Activated CD8-positive, alpha-beta T cell treated with anti-CD3 and anti-CD28 coated beads for 36 hours (primary cell): ENCODE measurements at regions of chr20 and their contacts with region 1.

Region 1: GRCh38 chr20:50516180-50516934 is 6.2 kb downstream of the PTPN1 start:
- DNase-seq: peak; percentile 26
- ATAC-seq: peak; percentile 45
- H3K4me3 Mint-ChIP-seq: peak overlapping the region; percentile 78
- H3K27ac Mint-ChIP-seq: peak overlapping the region; percentile 98
- H3K4me1 Mint-ChIP-seq: peaks cover 87% of the 10 kb centered on the region
- H3K27me3 Mint-ChIP-seq: no peaks in the 10 kb centered on the region
- CTCF ChIP-seq: no peak

Region 2: DNA sequence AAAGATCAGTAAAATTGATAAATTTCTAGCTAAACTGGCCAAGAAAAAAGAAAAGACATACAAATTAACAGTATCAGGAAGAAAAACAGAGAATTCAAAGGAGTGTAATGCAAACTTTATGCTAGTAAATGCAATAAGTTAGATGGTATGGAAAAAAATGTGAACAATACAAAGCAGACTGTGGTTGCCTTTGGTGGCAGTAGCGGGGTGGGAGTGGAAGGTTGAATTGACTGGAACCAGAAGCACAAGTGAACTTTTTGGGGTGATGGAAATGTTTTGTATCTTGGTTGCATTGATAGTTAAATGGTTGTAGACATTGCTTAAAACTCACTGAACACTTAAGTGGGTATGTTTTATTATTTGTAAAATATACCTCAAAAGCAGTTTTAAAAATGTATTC is 38.8 kb after region 1 on chr20:
- CTCF ChIA-PET with region 1: interaction called, 4 read pairs
- POLR2A ChIA-PET with region 1: interaction called, 42 read pairs
- intact Hi-C with region 1: loop called (anchors 5 kb)
- DNase-seq: peak; percentile 45
- ATAC-seq: no peak
- H3K4me3 Mint-ChIP-seq: no peak overlapping the region
- H3K27ac Mint-ChIP-seq: no peak overlapping the region
- H3K4me1 Mint-ChIP-seq: peaks cover 22% of the 10 kb centered on the region
- H3K27me3 Mint-ChIP-seq: no peaks in the 10 kb centered on the region
- CTCF ChIP-seq: no peak

Region 3: DNA sequence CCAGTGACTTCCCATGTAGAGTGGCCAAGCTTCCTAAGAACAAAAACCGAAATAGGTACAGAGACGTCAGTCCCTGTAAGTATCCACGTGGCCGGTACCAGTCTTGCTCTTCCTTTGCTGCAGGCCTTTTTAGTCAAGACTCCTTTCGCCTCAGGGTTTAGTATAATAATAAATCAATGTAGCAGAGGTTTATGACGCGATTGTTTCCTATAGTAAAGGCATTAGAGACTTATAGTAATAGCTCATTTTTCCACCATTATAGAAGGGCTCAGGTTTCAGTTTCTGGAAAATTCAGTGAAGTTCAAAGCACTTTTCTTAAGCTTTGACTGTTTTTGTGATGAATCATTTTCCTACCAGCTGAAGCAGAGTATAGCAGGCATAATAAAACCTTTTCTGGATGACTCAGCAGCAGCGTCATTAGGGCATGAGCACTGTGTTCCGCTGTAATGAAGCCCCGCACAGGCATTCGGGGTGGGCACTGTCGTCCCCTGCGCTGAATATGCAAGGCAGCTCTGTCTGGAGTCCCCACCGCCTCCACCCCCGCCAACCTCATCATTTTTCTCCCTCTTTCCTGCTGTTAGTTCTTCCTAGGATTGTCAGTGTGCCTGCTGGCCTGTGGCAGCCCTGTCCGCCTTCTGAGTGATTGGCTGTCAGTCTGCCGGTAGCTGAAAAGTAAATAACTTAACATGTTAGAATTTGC is 45.2 kb after region 1 on chr20:
- CTCF ChIA-PET with region 1: interaction called, 13 read pairs
- POLR2A ChIA-PET with region 1: interaction called, 42 read pairs
- intact Hi-C with region 1: loop called (anchors 5 kb)
- DNase-seq: peak; percentile 87
- ATAC-seq: peak; percentile 87
- H3K4me3 Mint-ChIP-seq: peak overlapping the region; percentile 50
- H3K27ac Mint-ChIP-seq: peak overlapping the region; percentile 94
- H3K4me1 Mint-ChIP-seq: peaks cover 65% of the 10 kb centered on the region
- H3K27me3 Mint-ChIP-seq: no peaks in the 10 kb centered on the region
- CTCF ChIP-seq: no peak

Region 4: DNA sequence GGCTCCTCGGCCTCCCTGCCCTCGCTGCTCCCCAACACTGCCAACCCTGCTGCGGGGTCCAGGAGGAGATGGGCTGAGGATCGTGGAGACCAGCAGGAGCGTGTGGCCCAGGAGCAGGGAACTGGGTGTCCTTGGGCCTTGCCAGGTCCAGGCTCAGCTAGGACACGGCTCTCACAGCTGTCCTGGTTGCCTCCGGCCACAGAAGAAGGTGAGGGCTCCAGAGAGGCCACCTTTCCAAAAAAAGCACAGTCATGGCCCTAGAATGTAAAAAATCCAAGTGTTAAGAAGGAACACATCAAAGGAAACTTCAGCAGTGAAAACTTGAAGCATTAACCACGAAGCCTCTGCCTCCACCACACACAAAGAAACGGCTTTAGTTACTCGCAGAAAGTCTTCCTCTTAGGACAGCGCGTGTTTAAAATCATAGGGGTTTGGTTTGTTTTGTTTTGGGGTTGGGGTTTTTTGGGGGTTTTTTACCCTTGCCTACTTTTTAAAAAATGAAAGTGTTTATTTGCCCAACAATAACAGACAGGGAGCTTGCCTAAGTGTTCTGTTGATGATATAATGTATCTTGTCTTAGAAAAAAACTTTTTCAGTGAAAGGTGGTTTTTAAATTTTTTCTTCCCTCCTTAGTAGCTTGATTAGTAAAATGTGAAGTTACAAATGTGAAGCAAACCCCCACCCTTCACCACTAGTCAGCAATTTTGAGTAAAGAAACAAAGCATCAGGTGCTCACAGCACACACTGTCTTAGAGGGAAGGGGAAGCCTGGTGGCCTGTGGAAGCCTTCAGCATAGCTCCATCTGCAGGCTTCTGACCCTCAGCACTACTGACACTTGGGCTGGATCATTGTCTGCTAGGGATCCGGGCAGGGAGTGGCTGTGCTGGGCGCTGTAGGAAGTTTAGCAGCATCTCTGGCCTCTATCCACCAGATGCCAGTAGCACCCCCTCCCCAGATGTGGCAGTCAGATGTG is 53.8 kb after region 1 on chr20:
- CTCF ChIA-PET with region 1: interaction called, 64 read pairs
- POLR2A ChIA-PET with region 1: interaction called, 42 read pairs
- intact Hi-C with region 1: no loop called
- DNase-seq: peak; percentile 71
- ATAC-seq: peak; percentile 93
- H3K4me3 Mint-ChIP-seq: no peak overlapping the region
- H3K27ac Mint-ChIP-seq: peak overlapping the region; percentile 78
- H3K4me1 Mint-ChIP-seq: peaks cover 58% of the 10 kb centered on the region
- H3K27me3 Mint-ChIP-seq: no peaks in the 10 kb centered on the region
- CTCF ChIP-seq: peak; percentile 46

Region 5: DNA sequence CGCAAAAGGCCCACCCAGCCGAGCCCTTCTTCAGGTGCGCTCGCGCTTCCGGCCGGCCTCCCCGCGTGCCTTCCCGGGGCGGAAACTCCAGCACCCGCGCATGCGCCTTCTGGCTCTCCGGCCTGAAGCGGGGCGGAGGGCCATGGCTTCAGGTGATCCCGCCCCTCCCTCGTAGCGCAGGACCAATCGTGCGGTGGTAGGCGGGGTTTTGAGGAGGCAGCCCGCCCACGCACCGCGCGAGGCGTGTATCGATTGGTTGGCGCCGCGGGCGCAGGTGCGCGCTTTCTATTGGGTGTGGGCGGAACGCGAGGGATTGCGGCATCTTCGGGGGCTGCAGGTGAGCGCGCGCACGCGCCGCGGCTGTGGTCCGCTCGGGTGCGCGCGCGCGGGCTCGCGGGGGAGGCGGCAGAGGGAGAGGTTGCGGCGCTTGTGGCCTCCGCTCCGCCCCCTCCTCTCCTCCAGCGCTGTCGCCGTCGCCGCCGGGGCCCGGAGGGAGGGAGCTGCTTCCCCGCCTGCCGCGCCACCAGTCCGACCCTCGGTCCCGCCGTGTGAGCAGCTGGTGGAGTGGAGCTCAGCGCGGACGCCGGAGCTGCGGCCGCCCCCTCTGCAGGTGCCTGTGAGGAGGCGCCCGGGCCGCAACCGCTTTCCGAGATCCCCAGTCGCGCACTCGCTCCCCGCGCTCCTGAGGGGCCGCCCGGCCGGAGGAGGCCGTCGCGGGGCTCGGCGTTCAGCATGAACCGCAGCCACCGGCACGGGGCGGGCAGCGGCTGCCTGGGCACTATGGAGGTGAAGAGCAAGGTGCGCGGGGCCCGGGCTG is 214.9 kb after region 1 on chr20 and contains the start of gene PARD6B:
- CTCF ChIA-PET with region 1: no interaction called
- POLR2A ChIA-PET with region 1: no interaction called
- intact Hi-C with region 1: no loop called
- DNase-seq: peak; percentile 100
- ATAC-seq: peak; percentile 94
- H3K4me3 Mint-ChIP-seq: peak within 1 kb of the TSS; percentile 84
- H3K27ac Mint-ChIP-seq: peak within 1 kb of the TSS; percentile 55
- H3K4me1 Mint-ChIP-seq: peaks cover 37% of the 10 kb centered on the region
- H3K27me3 Mint-ChIP-seq: no peaks in the 10 kb centered on the region
- CTCF ChIP-seq: no peak
- total RNA-seq, gene PARD6B: 4.7 to 6.6 TPM